ENCODE measurements at regions of chr5 and their contacts with region 1.

Region 1: GRCh38 chr5:73312146-73312871 is 136.3 kb downstream of the FOXD1 start:
- DNase-seq: no peak
- H3K4me3 ChIP-seq: peak overlapping the region in 1 of 2 donors; percentile 40
- H3K27ac ChIP-seq: peak overlapping the region; percentile 55 to 65
- H3K4me1 ChIP-seq: peaks cover 0 to 12% of the 10 kb centered on the region in 2 donors
- H3K27me3 ChIP-seq: no peaks in the 10 kb centered on the region
- CTCF ChIP-seq: peak in 1 of 3 experiments; percentile 23

Region 2: GRCh38 chr5:72572236-72572765 is 740.0 kb before region 1 on chr5:
- intact Hi-C with region 1: no loop called
- DNase-seq: no peak
- H3K4me3 ChIP-seq: no peak overlapping the region
- H3K27ac ChIP-seq: no peak overlapping the region
- H3K4me1 ChIP-seq: no peaks in the 10 kb centered on the region
- H3K27me3 ChIP-seq: no peaks in the 10 kb centered on the region
- CTCF ChIP-seq: no peak

Region 3: GRCh38 chr5:73419465-73420390 is 107.4 kb after region 1 on chr5:
- intact Hi-C with region 1: loop called (anchors 5 kb)
- DNase-seq: peak in 1 of 2 donors; percentile 80
- H3K4me3 ChIP-seq: peak overlapping the region; percentile 49 to 67
- H3K27ac ChIP-seq: peak overlapping the region; percentile 60 to 74
- H3K4me1 ChIP-seq: peaks cover 9 to 13% of the 10 kb centered on the region in 2 donors
- H3K27me3 ChIP-seq: no peaks in the 10 kb centered on the region
- CTCF ChIP-seq: no peak

Region 4: DNA sequence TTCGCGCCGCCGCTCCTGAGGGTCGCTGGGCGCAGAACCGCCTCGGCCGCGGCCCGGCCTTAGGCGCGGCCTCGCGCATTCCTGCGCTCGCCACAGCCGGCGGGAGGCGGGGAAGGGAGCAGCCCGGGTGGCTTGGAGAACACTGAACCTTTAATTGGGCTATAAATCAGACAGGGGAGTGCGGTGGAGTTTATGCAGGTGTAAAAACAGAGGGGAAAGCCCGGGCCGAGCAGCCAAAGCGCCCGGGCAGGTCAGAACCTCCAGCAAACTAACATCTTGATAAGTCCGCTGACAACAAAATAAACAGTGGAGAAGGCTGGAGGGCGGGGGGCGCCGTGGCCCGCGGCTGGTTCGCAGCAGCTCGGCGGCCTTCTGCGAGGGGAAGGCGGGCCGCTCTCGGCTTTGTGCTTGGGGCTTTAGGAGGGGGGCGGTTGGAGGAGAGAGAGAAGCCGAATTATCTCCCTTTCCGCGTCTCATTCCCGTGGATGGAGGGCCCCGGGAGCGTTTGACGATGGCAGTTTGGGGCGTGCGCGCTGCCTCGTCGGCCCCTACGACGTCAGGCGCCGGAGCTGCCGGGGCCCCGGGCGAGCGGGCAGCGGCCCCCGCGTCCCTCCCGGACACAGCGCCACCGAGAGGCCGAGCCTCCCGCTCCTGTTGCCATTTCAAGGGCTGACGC is 124.9 kb after region 1 on chr5:
- intact Hi-C with region 1: loop called (anchors 5 kb)
- DNase-seq: peak in 1 of 2 donors; percentile 79
- H3K4me3 ChIP-seq: peak overlapping the region; percentile 44 to 61
- H3K27ac ChIP-seq: peak overlapping the region; percentile 86
- H3K4me1 ChIP-seq: peaks cover 4 to 17% of the 10 kb centered on the region in 2 donors
- H3K27me3 ChIP-seq: no peaks in the 10 kb centered on the region
- CTCF ChIP-seq: peak; percentile 30 to 77 (median 59)

Region 5: DNA sequence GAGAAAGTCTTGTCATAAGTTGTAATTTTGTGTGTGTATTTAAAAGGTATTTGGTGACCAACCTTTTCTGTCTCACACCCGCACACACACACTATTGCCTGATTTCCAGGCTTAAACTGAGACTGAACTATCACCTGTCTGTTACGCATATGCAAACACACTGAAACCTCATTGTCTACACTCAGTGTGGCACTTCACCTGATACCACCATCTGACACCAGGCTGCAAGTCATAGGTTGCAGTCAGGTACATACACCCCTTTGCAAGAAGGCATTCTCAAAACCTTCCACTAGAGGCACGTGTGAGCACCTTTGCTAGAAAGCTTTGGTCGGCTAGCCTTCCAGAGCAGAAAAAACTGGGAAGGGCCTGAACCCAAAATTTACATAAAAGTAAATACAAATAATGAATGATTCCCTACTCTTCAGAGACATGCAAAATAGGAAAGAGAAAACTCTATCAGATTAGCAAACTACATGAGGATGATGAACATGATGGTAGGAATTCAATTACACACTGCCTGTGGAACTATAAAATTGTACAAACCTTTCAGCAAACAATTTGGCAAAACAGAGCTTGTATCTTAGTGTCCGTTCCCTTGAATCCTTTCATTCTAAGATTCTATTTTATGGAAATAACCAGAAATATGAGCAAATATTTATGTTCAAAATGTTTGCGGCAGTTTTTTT is 142.2 kb after region 1 on chr5:
- intact Hi-C with region 1: loop called (anchors 5 kb)
- DNase-seq: no peak
- H3K4me3 ChIP-seq: no peak overlapping the region
- H3K27ac ChIP-seq: no peak overlapping the region
- H3K4me1 ChIP-seq: peaks cover 0 to 7% of the 10 kb centered on the region in 2 donors
- H3K27me3 ChIP-seq: no peaks in the 10 kb centered on the region
- CTCF ChIP-seq: peak; percentile 39 to 74 (median 72)